CD4-positive, alpha-beta T cell (primary cell): ENCODE measurements at regions of chr1 and their contacts with region 1.

Region 1: DNA sequence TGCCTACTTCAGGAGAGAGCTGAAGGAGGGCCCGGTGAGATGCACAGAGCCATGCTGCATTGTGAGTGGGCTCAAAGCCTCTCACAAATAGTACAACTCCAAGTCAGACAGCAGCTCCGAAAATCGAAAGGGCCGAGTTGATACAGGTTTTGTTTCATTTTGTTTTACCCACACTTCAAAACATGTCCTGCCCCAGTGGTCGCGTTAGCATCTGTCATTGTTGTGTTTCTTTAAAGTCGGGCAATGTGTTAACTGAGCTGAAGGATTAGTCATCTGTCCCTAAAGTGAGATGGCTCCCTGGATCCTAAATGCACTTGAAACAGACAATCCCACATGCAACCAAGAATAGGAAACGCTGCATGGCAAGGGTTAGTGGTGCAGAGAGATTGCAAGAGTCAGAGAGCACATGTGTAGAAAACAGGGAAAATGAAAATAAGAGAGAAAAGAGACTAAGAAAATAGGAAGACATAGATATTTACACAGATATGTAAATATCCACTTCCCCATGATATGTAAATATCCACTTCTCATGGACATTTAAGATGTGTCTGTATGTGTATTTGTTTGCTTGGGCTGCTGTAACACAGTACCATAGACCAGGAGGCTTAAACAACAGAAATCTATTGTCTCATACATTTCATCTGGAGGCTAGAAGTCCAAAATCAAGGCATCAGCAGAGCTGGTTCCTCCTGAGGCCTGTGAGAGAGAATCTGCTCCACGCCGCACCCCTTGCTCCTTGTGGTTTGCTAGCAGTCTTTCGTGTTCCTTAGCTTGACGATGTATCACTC is 131.4 kb upstream of the RAB4A start:
- DNase-seq: peak in 4 of 14 experiments; percentile 5 to 41 (median 26)
- ATAC-seq: no peak
- H3K4me3 ChIP-seq: peak overlapping the region; percentile 40
- H3K4me3 Mint-ChIP-seq: peak overlapping the region; percentile 66
- H3K27ac ChIP-seq: peak overlapping the region in 1 of 2 donors; percentile 45
- H3K27ac Mint-ChIP-seq: peak overlapping the region; percentile 5
- H3K4me1 ChIP-seq: peaks cover 26% of the 10 kb centered on the region
- H3K4me1 Mint-ChIP-seq: peaks cover 48% of the 10 kb centered on the region
- H3K27me3 ChIP-seq: no peaks in the 10 kb centered on the region
- H3K27me3 Mint-ChIP-seq: no peaks in the 10 kb centered on the region
- CTCF ChIP-seq: no peak

Region 2: GRCh38 chr1:229127301-229127700 is 12.2 kb before region 1 on chr1:
- CTCF ChIA-PET with region 1: interaction called, 3 read pairs
- POLR2A ChIA-PET with region 1: interaction called, 57 read pairs
- intact Hi-C with region 1: no loop called
- DNase-seq: peak in 3 of 14 experiments; percentile 44 to 49 (median 44)
- ATAC-seq: no peak
- H3K4me3 ChIP-seq: no peak overlapping the region
- H3K4me3 Mint-ChIP-seq: peak overlapping the region; percentile 60
- H3K27ac ChIP-seq: no peak overlapping the region
- H3K27ac Mint-ChIP-seq: peak overlapping the region; percentile 57
- H3K4me1 ChIP-seq: peaks cover 41% of the 10 kb centered on the region
- H3K4me1 Mint-ChIP-seq: peaks cover 58% of the 10 kb centered on the region
- H3K27me3 ChIP-seq: no peaks in the 10 kb centered on the region
- H3K27me3 Mint-ChIP-seq: no peaks in the 10 kb centered on the region
- CTCF ChIP-seq: no peak

Region 3: GRCh38 chr1:229186373-229187056 is 47.0 kb after region 1 on chr1:
- CTCF ChIA-PET with region 1: no interaction called
- POLR2A ChIA-PET with region 1: no interaction called
- intact Hi-C with region 1: loop called in 1 of 2 experiments (anchors 5 kb)
- DNase-seq: peak in 2 of 14 experiments; percentile 11 to 40
- ATAC-seq: no peak
- H3K4me3 ChIP-seq: no peak overlapping the region
- H3K4me3 Mint-ChIP-seq: no peak overlapping the region
- H3K27ac ChIP-seq: peak overlapping the region in 1 of 2 donors; percentile 33
- H3K27ac Mint-ChIP-seq: no peak overlapping the region
- H3K4me1 ChIP-seq: peaks cover 8% of the 10 kb centered on the region
- H3K4me1 Mint-ChIP-seq: no peaks in the 10 kb centered on the region
- H3K27me3 ChIP-seq: no peaks in the 10 kb centered on the region
- H3K27me3 Mint-ChIP-seq: no peaks in the 10 kb centered on the region
- CTCF ChIP-seq: no peak